GM12878 (cell line): ENCODE measurements at regions of chr2 and their contacts with region 1.

Region 1: DNA sequence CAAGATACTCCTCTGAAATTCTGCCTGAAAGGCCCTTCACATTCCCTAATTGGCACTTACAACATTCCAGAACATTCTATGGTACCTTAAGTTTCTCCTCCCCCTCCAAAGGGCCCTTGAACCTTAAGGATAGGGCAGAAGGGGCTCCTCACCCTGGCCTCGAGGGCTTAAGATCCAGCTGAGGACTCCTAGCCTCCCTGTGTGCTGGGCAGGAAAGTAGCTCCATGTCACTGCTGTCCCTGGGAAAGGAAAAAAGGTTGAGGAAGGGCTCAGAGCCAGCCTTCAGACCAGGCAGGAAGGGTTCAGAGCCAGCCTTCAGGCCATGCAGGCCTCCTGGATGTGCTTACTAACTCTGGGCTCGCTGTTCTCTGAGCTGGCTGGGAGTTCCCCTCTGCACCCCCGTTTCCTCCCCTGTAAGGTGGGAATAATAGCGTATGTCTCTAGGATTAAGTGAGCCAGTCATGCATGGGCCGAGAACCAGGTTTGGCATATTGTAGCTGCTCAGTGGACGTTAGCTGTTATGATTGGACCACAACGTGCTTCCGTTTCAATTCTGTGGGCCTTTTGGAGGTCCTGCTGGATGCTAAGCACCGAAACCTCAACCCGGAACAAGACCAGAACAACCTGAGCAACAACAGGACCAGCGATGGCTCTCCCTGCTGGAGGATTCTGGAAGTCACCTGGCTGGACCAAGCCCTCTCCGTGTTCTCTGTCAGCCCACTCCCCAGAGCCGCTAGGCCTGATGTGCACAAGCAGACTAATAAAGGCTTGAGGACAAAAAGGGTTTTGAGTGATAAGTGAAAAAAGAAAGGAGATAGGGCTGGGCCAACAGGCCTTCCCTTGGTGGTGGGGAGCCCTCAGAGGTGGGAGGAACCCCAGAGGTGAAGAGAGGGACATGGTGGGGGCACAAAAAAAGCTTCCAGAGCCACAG is 1.0 kb upstream of the B3GNT7 start:
- DNase-seq: peak; percentile 87
- ATAC-seq: peak; percentile 66
- H3K4me3 ChIP-seq: peak overlapping the region; percentile 65
- H3K27ac ChIP-seq: peak overlapping the region; percentile 95
- H3K4me1 ChIP-seq: peaks cover 58% of the 10 kb centered on the region
- H3K27me3 ChIP-seq: no peaks in the 10 kb centered on the region
- CTCF ChIP-seq: peak; percentile 52 to 67 (median 61)
- EP300 ChIP-seq: peak in 1 of 2 experiments; percentile 53; a peak in 1 of 4 replicates
- POLR2A ChIP-seq: peak; percentile 76
- RAD21 ChIP-seq: peak; percentile 47

Region 2: GRCh38 chr2:231361671-231362554 is 32.6 kb before region 1 on chr2:
- CTCF ChIA-PET with region 1: interaction called, 19 read pairs
- POLR2A ChIA-PET with region 1: no interaction called
- RAD21 ChIA-PET with region 1: interaction called, 4 read pairs
- SMC1A ChIA-PET with region 1: interaction called, 10 read pairs
- in situ Hi-C with region 1: no loop called
- intact Hi-C with region 1: no loop called
- DNase-seq: peak; percentile 26
- ATAC-seq: peak; percentile 98
- H3K4me3 ChIP-seq: no peak overlapping the region
- H3K27ac ChIP-seq: peak overlapping the region; percentile 78
- H3K4me1 ChIP-seq: peaks cover 15% of the 10 kb centered on the region
- H3K27me3 ChIP-seq: no peaks in the 10 kb centered on the region
- CTCF ChIP-seq: peak; percentile 19 to 46 (median 38); a peak in 5 of 6 replicates
- EP300 ChIP-seq: no peak
- POLR2A ChIP-seq: peak; percentile 35; the same call in 1 of the 2 replicates
- RAD21 ChIP-seq: 0 out of 2 replicates have a peak, but pooled peaks have one; percentile 27